ENCODE measurements at regions of chr1 and their contacts with region 1.

Region 1: GRCh38 chr1:76074321-76075187 is at the start of gene ST6GALNAC3:
- DNase-seq: peak; percentile 73 to 85 (median 81)
- ATAC-seq: peak; percentile 98
- H3K4me3 ChIP-seq: peak within 1 kb of the TSS; percentile 74
- H3K4me3 Mint-ChIP-seq: peak within 1 kb of the TSS; percentile 86 to 93 (median 91)
- H3K27ac ChIP-seq: peak within 1 kb of the TSS; percentile 71
- H3K27ac Mint-ChIP-seq: peak within 1 kb of the TSS; percentile 56 to 97 (median 92)
- H3K4me1 ChIP-seq: peaks cover 9 to 15% of the 10 kb centered on the region in 2 donors
- H3K4me1 Mint-ChIP-seq: peaks cover 8 to 35% (median 26%) of the 10 kb centered on the region in 7 donors
- H3K27me3 ChIP-seq: no peaks in the 10 kb centered on the region
- H3K27me3 Mint-ChIP-seq: peaks cover 0 to 19% (median 0%) of the 10 kb centered on the region in 5 donors
- total RNA-seq, gene ST6GALNAC3: 1.9 to 4.8 (median 3.6) TPM in 4 of 5 experiments, not detected in the other

Region 2: GRCh38 chr1:74197657-74198552 is 1876.6 kb before region 1 on chr1 and contains the starts of genes FPGT and LRRIQ3:
- CTCF ChIA-PET with region 1: no interaction called
- POLR2A ChIA-PET with region 1: no interaction called
- intact Hi-C with region 1: loop called (anchors 2 to 5 kb)
- DNase-seq: peak; percentile 90 to 97 (median 96)
- ATAC-seq: peak; percentile 99
- H3K4me3 ChIP-seq: peak within 1 kb of the TSS; percentile 85
- H3K4me3 Mint-ChIP-seq: peak within 1 kb of the TSS; percentile 91 to 99 (median 94)
- H3K27ac ChIP-seq: peak within 1 kb of the TSS; percentile 84
- H3K27ac Mint-ChIP-seq: peak within 1 kb of the TSS; percentile 91 to 98 (median 96)
- H3K4me1 ChIP-seq: peaks cover 5% of the 10 kb centered on the region in 2 donors
- H3K4me1 Mint-ChIP-seq: peaks cover 16 to 39% (median 19%) of the 10 kb centered on the region in 7 donors
- H3K27me3 ChIP-seq: no peaks in the 10 kb centered on the region
- H3K27me3 Mint-ChIP-seq: peaks cover 0 to 7% (median 0%) of the 10 kb centered on the region in 5 donors
- total RNA-seq, gene FPGT: 5.6 to 17.7 (median 12.5) TPM
- total RNA-seq, gene LRRIQ3: 0.32 to 1.7 (median 0.47) TPM

Region 3: GRCh38 chr1:75724472-75725022 is 350.0 kb before region 1 on chr1 and contains the start of gene ACADM:
- CTCF ChIA-PET with region 1: no interaction called
- POLR2A ChIA-PET with region 1: no interaction called
- intact Hi-C with region 1: loop called (anchors 1 to 10 kb)
- DNase-seq: peak; percentile 68 to 93 (median 79)
- ATAC-seq: peak; percentile 98
- H3K4me3 ChIP-seq: peak within 1 kb of the TSS; percentile 92
- H3K4me3 Mint-ChIP-seq: peak within 1 kb of the TSS; percentile 94 to 100 (median 98)
- H3K27ac ChIP-seq: peak within 1 kb of the TSS; percentile 89
- H3K27ac Mint-ChIP-seq: peak within 1 kb of the TSS; percentile 92 to 99 (median 97)
- H3K4me1 ChIP-seq: peaks cover 5 to 12% of the 10 kb centered on the region in 2 donors
- H3K4me1 Mint-ChIP-seq: peaks cover 29 to 75% (median 64%) of the 10 kb centered on the region in 7 donors
- H3K27me3 ChIP-seq: no peaks in the 10 kb centered on the region
- H3K27me3 Mint-ChIP-seq: peaks cover 0 to 2% (median 0%) of the 10 kb centered on the region in 5 donors
- total RNA-seq, gene ACADM: 11.1 to 36.4 (median 32.9) TPM

Region 4: DNA sequence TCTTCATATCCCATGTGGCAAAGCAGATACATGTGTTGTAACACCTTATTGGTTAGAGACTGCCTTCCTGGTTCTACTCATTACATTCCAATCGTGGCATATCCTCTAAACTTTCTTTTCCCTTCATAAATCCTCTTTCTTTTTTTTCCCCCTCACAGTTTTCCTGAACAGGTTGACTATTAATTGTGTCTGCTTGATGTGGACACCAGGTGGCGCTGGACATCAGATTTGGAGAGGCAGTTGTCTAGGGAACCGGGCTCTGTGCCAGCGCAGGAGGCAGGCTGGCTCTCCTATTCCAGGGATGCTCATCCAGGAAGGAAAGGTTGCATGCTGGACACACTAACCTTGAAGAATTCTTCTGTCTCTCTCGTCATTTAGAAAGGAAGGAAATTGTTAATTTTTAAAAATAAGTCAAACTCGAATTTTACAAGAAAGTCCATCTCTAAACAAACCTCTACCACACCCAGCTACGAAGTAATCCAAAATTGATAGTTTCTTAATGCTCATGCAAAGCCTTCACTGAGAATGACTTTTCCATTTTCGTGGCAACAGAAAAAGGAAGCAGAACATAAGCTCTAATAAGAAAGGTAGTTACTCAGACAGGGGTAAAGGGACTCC is 82.9 kb before region 1 on chr1:
- CTCF ChIA-PET with region 1: no interaction called
- POLR2A ChIA-PET with region 1: no interaction called
- intact Hi-C with region 1: loop called in 1 of 2 experiments (anchors 1 kb)
- DNase-seq: peak; percentile 24 to 69 (median 60)
- ATAC-seq: peak; percentile 68
- H3K4me3 ChIP-seq: no peak overlapping the region
- H3K4me3 Mint-ChIP-seq: no peak overlapping the region
- H3K27ac ChIP-seq: no peak overlapping the region
- H3K27ac Mint-ChIP-seq: no peak overlapping the region
- H3K4me1 ChIP-seq: no peaks in the 10 kb centered on the region
- H3K4me1 Mint-ChIP-seq: no peaks in the 10 kb centered on the region
- H3K27me3 ChIP-seq: peaks cover 4% of the 10 kb centered on the region in 2 donors
- H3K27me3 Mint-ChIP-seq: peaks cover 0 to 8% (median 3%) of the 10 kb centered on the region in 5 donors

Region 5: GRCh38 chr1:76294482-76295194 is 220.1 kb after region 1 on chr1:
- CTCF ChIA-PET with region 1: no interaction called
- POLR2A ChIA-PET with region 1: no interaction called
- intact Hi-C with region 1: loop called in 1 of 2 experiments (anchors 5 kb)
- DNase-seq: peak in 5 of 9 donors; percentile 21 to 59 (median 49)
- ATAC-seq: peak; percentile 62
- H3K4me3 ChIP-seq: peak overlapping the region; percentile 7
- H3K4me3 Mint-ChIP-seq: peak overlapping the region; percentile 27 to 83 (median 69)
- H3K27ac ChIP-seq: peak overlapping the region; percentile 41
- H3K27ac Mint-ChIP-seq: peak overlapping the region; percentile 63 to 88 (median 81)
- H3K4me1 ChIP-seq: peaks cover 41 to 63% of the 10 kb centered on the region in 2 donors
- H3K4me1 Mint-ChIP-seq: peaks cover 21 to 93% (median 77%) of the 10 kb centered on the region in 7 donors
- H3K27me3 ChIP-seq: no peaks in the 10 kb centered on the region
- H3K27me3 Mint-ChIP-seq: peaks cover 0 to 2% (median 0%) of the 10 kb centered on the region in 5 donors

Region 6: DNA sequence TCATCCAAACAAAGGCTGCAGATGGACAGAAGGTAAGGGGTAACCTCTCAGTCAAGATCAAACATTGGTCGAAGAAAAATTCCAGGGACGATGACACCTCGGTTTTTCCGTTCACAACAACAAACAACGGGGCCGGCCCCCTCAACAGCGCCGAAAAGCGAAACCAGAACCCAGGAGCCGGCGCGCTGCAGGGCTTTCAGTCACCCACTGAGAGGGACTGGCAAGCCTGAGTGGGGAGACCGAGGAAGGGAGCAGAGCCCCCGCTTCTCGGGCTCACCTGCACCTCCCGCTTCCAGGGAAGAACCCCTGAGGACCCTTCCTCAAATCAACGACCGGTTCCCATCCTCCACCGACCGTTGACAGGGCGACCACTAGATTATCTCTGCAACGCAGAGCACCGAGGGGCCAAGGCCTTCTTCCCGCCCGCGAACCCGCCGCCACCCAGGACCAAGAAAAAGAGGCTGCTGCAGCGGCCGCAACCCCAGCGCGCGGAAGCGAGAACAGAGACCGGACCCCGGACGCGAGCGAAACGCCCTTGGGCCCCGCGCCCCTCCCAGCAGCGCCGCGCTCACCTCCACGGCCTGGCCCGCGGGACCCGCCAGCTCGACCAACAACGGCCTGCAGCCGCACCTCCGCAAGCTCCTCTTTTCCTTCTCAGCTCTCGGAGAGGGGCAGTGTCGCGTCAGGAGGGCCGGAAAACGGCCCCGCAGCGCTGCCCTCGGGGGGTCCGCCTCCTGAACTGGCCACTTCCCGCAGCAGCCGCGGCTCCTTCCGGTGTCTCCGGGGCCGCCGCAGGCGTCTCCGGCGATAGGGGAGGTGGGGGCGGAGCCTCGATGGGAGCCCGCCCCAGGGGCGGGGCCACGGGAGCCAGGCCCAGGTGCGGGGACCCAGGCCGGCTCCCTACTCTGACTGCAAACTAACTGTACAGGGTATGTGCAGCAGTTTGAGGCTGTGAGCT is 1684.8 kb after region 1 on chr1 and contains the start of gene USP33:
- CTCF ChIA-PET with region 1: no interaction called
- POLR2A ChIA-PET with region 1: no interaction called
- intact Hi-C with region 1: loop called in 1 of 2 experiments (anchors 10 kb)
- DNase-seq: peak; percentile 87 to 98 (median 92)
- ATAC-seq: peak; percentile 98
- H3K4me3 ChIP-seq: peak within 1 kb of the TSS; percentile 61
- H3K4me3 Mint-ChIP-seq: peak within 1 kb of the TSS; percentile 93 to 98 (median 96)
- H3K27ac ChIP-seq: peak within 1 kb of the TSS; percentile 86
- H3K27ac Mint-ChIP-seq: peak within 1 kb of the TSS; percentile 84 to 97 (median 94)
- H3K4me1 ChIP-seq: peaks cover 24 to 25% of the 10 kb centered on the region in 2 donors
- H3K4me1 Mint-ChIP-seq: peaks cover 28 to 64% (median 43%) of the 10 kb centered on the region in 7 donors
- H3K27me3 ChIP-seq: no peaks in the 10 kb centered on the region
- H3K27me3 Mint-ChIP-seq: peaks cover 0 to 10% (median 0%) of the 10 kb centered on the region in 5 donors
- total RNA-seq, gene USP33: 54.0 to 101 (median 86.4) TPM

Region 7: GRCh38 chr1:77978969-77979876 is 1904.7 kb after region 1 on chr1 and contains the start of gene FUBP1:
- CTCF ChIA-PET with region 1: no interaction called
- POLR2A ChIA-PET with region 1: no interaction called
- intact Hi-C with region 1: loop called in 1 of 2 experiments (anchors 10 kb)
- DNase-seq: peak; percentile 81 to 98 (median 97)
- ATAC-seq: peak; percentile 84
- H3K4me3 ChIP-seq: peak within 1 kb of the TSS; percentile 99
- H3K4me3 Mint-ChIP-seq: no peak within 1 kb of the TSS
- H3K27ac ChIP-seq: peak within 1 kb of the TSS; percentile 97
- H3K27ac Mint-ChIP-seq: no peak within 1 kb of the TSS
- H3K4me1 ChIP-seq: peaks cover 31 to 38% of the 10 kb centered on the region in 2 donors
- H3K4me1 Mint-ChIP-seq: peaks cover 28 to 54% (median 39%) of the 10 kb centered on the region in 7 donors
- H3K27me3 ChIP-seq: no peaks in the 10 kb centered on the region
- H3K27me3 Mint-ChIP-seq: no peaks in the 10 kb centered on the region
- total RNA-seq, gene FUBP1: 182 to 253 (median 224) TPM